ENCODE measurements at regions of chr16 and their contacts with region 1.

Region 1: DNA sequence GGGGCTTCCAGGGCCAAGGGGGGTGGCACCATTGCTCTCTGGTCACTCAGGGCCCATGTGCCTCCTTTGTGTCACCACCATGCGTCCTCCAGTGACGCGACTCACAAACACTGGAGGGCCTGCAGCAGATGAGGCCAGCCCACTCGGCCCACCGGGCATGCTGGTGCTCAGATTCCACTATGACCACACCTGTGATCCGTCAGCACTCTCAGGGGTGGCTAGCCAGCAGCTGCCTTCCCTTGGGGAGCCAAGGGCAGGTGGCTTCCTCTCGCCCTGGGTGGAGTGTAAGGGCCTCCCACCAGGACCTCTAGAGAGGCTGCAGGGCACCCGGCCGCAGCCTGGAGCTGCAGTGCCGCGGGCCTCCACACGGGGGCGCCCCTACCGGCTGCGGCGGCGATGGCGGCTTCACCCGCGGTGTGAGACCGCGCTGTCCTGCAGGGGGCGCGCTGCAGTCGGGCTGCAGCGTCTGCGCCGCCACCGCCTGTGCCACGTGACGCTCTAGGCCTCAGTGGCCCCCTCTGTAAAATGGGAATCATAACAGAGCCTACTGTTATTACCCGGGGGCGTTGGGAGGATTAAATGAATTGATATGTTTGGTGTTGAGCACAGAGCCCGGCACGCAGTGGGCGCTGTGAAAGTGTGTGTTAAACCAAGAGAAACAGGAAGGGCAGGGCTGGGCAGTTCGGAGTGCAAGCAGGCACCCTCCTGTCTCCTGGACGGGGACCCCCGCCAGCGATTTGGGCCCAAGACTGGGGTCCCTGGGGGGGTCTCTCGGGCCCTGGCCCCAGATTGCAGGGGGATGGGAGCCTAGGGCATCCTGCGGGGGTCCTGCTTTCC is 192.4 kb upstream of the GSE1 start:
- DNase-seq: peak; percentile 39 to 67
- H3K4me3 ChIP-seq: no peak overlapping the region
- H3K4me3 Mint-ChIP-seq: no peak overlapping the region
- H3K27ac Mint-ChIP-seq: peak overlapping the region; percentile 49
- H3K4me1 ChIP-seq: peaks cover 39% of the 10 kb centered on the region
- H3K4me1 Mint-ChIP-seq: peaks cover 10% of the 10 kb centered on the region
- H3K27me3 ChIP-seq: no peaks in the 10 kb centered on the region
- H3K27me3 Mint-ChIP-seq: no peaks in the 10 kb centered on the region
- CTCF ChIP-seq: peak; percentile 75 to 98

Region 2: GRCh38 chr16:85137323-85138072 is 283.2 kb before region 1 on chr16:
- CTCF ChIA-PET with region 1: no interaction called
- POLR2A ChIA-PET with region 1: no interaction called
- intact Hi-C with region 1: no loop called
- DNase-seq: peak; percentile 81
- H3K4me3 ChIP-seq: no peak overlapping the region
- H3K4me3 Mint-ChIP-seq: peak overlapping the region; percentile 67
- H3K27ac Mint-ChIP-seq: peak overlapping the region; percentile 19
- H3K4me1 ChIP-seq: peaks cover 13% of the 10 kb centered on the region
- H3K4me1 Mint-ChIP-seq: peaks cover 24% of the 10 kb centered on the region
- H3K27me3 ChIP-seq: no peaks in the 10 kb centered on the region
- H3K27me3 Mint-ChIP-seq: no peaks in the 10 kb centered on the region
- CTCF ChIP-seq: no peak

Region 3: DNA sequence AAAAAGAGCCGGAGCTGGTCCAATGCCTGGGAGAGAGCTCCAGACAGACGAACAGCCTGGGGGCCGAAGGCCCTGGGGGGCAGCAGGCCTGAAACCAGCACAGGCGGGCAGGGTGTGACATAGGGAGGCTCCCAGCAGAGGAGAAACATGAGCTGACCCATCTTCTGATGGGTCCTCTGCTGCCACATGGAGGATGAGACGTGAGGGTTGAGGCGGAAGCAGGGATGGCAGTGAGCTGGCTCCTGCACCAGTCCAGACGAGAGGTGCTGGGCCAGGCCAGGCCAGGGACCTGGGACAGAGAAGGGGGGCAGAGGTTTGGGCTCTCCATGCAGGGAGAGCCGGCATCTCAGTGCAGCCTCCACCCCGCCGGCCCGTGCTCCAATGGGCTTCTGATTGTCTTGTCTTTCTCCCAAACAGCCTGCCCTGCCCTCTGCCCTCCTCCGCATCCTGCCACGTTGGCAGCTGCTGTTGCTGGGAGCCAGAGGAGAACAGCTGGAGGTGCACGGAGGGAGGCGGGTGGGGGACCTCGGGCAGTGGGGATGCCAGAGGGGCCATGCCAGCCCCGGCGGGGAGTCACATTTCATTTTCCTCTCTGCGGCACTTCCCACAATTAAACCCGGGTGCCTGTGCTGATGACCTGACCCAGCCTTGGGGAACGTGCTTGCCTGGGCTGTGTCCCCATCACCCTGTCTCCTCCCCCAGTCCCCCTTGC is 53.3 kb after region 1 on chr16:
- CTCF ChIA-PET with region 1: interaction called, 13 read pairs
- POLR2A ChIA-PET with region 1: no interaction called
- intact Hi-C with region 1: loop called (anchors 1 kb)
- DNase-seq: no peak
- H3K4me3 ChIP-seq: no peak overlapping the region
- H3K4me3 Mint-ChIP-seq: no peak overlapping the region
- H3K27ac Mint-ChIP-seq: no peak overlapping the region
- H3K4me1 ChIP-seq: peaks cover 19% of the 10 kb centered on the region
- H3K4me1 Mint-ChIP-seq: peaks cover 16% of the 10 kb centered on the region
- H3K27me3 ChIP-seq: no peaks in the 10 kb centered on the region
- H3K27me3 Mint-ChIP-seq: no peaks in the 10 kb centered on the region
- CTCF ChIP-seq: peak in 1 of 2 experiments; percentile 5

Region 4: DNA sequence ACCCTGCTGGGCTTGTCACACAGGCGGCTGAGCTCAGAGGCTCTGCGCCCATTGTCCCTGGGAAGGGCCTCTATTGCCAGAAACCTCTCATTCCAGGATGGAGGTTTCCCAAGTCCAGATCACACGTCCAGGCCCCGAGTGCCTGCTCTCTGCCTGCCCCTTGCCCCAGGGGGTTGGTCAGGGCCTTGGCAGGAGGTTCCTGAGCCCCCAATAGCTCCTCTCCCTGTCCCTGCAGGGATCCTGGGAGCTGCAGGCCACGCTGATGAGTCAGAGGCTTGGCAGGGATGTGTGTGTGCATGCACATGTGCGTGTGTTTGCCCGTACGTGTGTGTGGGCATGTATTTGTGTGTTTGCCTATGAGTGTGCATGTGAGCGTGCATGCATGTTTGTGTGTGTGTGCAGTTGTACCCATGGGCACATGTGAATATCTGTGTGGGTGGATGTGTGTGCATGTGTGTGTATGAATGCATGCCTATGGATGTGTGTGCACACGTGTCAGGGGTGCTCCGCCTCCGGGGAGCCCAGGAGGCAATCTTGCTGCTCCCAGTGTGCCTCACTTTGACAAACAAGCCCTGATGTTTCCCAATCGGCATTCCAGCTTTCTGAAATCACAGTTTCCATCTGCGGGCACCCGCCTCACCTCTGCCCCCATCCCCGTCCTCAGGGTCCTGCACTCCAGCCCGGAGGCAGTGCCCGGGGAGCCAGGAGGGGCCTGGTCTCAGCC is 94.0 kb after region 1 on chr16:
- CTCF ChIA-PET with region 1: interaction called, 7 read pairs
- POLR2A ChIA-PET with region 1: interaction called, 4 read pairs
- intact Hi-C with region 1: loop called (anchors 1 kb)
- DNase-seq: peak; percentile 95 to 96
- H3K4me3 ChIP-seq: peak overlapping the region; percentile 18; the same call in 1 of the 2 replicates
- H3K4me3 Mint-ChIP-seq: peak overlapping the region; percentile 46
- H3K27ac Mint-ChIP-seq: peak overlapping the region; percentile 93
- H3K4me1 ChIP-seq: peaks cover 36% of the 10 kb centered on the region
- H3K4me1 Mint-ChIP-seq: peaks cover 33% of the 10 kb centered on the region
- H3K27me3 ChIP-seq: no peaks in the 10 kb centered on the region
- H3K27me3 Mint-ChIP-seq: no peaks in the 10 kb centered on the region
- CTCF ChIP-seq: peak; percentile 34 to 58

Region 5: DNA sequence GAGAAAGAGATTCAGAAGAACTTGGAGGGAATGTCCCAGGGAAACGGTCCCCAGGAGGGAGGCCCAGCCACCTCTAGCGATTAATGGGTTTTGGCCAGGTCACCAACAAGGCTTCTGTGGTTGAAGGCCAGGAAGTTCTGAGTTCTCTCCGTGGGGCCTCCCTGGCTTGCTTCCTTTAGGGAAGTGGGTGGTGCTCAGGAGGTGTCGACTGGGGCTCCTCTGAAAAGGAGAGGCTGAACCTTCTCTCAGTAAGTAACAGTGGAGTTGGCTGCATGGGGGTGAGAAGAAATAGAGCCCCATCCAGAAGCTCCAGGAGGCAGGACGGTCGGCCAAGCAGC is 115.3 kb after region 1 on chr16:
- CTCF ChIA-PET with region 1: interaction called, 8 read pairs
- POLR2A ChIA-PET with region 1: no interaction called
- intact Hi-C with region 1: loop called (anchors 1 kb)
- DNase-seq: no peak
- H3K4me3 ChIP-seq: no peak overlapping the region
- H3K4me3 Mint-ChIP-seq: peak overlapping the region; percentile 58
- H3K27ac Mint-ChIP-seq: peak overlapping the region; percentile 97
- H3K4me1 ChIP-seq: peaks cover 40% of the 10 kb centered on the region
- H3K4me1 Mint-ChIP-seq: peaks cover 34% of the 10 kb centered on the region
- H3K27me3 ChIP-seq: no peaks in the 10 kb centered on the region
- H3K27me3 Mint-ChIP-seq: no peaks in the 10 kb centered on the region
- CTCF ChIP-seq: no peak

Measured in Caco-2 (cell line).